ENCODE measurements at regions of chr2 and their contacts with region 1.

Region 1: DNA sequence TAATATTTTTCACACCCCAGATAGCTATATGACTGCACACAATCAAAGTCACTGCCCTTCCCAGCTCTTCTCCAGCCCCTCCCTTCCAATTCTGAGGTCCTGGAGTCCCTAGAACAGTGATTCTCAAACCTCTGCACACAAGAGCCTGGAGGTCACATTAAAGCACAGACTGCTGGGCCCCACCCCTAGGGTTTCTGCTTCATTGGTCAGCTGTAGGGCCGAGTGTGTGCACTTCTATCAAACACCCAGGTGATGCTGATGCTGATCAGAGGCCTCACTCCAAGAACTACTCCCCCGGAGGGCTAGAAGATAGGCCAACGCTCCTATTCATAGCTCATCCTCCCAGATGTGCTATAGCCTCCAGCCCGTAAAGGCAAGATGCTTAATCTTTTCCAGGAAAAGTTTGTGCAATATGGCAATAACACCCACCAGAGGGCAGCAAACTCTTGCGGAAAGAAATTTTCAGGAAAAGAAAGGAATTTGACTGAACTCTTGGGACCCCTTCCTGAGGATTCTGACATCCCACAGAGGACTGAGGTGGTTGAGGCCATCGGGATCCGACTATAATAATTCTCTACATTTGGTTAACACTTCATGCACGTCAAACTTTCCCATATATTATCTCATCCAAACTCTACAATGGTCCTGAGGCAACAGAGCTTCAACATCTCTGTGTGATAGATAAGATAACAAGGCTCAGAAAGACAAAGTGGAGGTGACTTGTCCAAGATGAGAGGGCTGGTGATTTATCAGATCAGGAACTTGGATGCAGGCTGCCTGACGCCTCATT is 194.2 kb upstream of the PKDCC start:
- DNase-seq: peak; percentile 37
- ATAC-seq: peak; percentile 19 to 47

Region 2: GRCh38 chr2:42086500-42086953 is 232.9 kb after region 1 on chr2:
- intact Hi-C with region 1: loop called (anchors 2 to 5 kb)
- DNase-seq: no peak
- ATAC-seq: peak; percentile 50 to 62

Region 3: GRCh38 chr2:42223855-42224268 is 370.2 kb after region 1 on chr2:
- intact Hi-C with region 1: loop called in 1 of 2 experiments (anchors 10 kb)
- DNase-seq: no peak
- ATAC-seq: no peak